IMR-90 (cell line): ENCODE measurements at regions of chr4 and their contacts with region 1.

Region 1: DNA sequence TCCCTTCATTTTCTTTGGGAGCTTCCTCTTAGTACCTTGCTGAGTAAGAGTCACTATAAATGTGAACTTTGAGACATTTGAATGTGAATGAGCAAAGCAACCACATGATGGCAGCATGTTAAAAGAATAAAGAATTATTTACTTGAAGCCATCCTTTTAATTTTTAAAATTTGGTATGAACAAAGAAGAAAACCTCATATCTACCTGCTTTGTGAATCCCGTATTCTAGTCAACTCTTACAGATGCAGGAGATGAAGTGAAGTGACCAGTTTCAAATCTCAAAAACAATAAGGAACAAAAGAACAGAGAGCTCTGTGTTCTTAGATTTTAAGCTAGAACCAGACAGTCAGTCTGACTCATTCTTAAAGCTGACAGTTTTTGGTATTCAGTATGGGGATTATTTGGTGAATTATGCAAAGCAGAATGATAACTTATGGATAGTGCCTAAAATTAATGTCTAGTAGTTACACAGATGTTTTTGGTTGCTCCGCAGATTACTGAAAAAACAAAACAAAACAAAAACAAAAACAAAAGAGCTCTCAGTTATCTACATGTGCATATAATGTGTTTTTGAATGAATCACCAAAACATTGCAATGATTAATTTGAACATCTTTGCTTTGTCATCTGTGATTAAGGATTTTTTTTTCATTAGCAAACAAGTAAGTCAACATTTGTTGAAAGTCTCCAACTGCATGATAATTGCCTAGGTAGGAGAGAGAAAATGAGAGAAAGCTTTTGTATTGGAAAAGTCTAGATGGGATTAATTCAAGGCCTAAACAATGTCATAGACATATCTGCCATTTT is 48.2 kb upstream of the H2AZ1 start:
- DNase-seq: peak; percentile 62
- ATAC-seq: peak; percentile 90
- H3K4me3 ChIP-seq: no peak overlapping the region
- H3K27ac ChIP-seq: no peak overlapping the region
- H3K4me1 ChIP-seq: no peaks in the 10 kb centered on the region
- H3K27me3 ChIP-seq: no peaks in the 10 kb centered on the region
- CTCF ChIP-seq: peak; percentile 58
- POLR2A ChIP-seq: no peak
- RAD21 ChIP-seq: peak; percentile 45

Region 2: DNA sequence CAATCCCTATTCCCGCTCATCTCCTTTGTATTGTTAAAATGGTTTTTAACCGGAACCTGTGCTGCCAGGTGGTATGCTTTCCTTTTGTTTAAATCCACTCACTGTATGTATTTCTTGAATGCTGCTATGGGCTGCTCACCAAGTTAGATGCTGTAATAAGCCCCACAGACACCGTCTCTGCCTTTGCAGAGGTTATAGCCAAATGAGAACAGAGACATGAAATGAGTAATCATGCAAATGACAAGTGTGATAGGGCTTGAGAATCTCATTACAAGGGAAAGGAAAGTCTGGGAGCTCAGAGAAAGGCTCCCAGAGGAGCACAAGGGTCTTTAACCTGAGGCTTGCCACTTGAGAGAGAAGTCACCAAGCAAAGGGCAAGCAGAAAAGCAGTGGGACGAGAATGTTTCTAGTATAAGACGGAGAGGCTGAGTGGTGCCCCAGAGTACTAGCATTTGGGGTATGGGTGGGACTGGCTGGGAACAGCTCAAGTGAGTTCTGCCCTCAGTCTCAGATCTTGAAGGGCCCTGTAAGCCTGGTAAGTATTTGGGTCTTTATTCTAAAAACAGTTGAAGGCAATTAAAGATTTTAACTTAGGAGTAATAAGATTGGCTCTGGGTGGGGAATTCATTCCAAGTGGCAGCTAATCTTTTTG is 62.6 kb after region 1 on chr4:
- CTCF ChIA-PET with region 1: interaction called, 7 read pairs
- POLR2A ChIA-PET with region 1: no interaction called
- dilution Hi-C with region 1: no loop called
- in situ Hi-C with region 1: no loop called
- intact Hi-C with region 1: loop called (anchors 1 kb)
- DNase-seq: no peak
- ATAC-seq: no peak
- H3K4me3 ChIP-seq: no peak overlapping the region
- H3K27ac ChIP-seq: no peak overlapping the region
- H3K4me1 ChIP-seq: peaks cover 5% of the 10 kb centered on the region
- H3K27me3 ChIP-seq: no peaks in the 10 kb centered on the region
- CTCF ChIP-seq: no peak
- POLR2A ChIP-seq: no peak
- RAD21 ChIP-seq: no peak

Region 3: GRCh38 chr4:100093091-100093866 is 95.0 kb after region 1 on chr4:
- CTCF ChIA-PET with region 1: interaction called, 12 read pairs
- POLR2A ChIA-PET with region 1: no interaction called
- dilution Hi-C with region 1: no loop called
- in situ Hi-C with region 1: no loop called
- intact Hi-C with region 1: loop called (anchors 5 kb)
- DNase-seq: peak; percentile 82
- ATAC-seq: peak; percentile 87
- H3K4me3 ChIP-seq: no peak overlapping the region
- H3K27ac ChIP-seq: no peak overlapping the region
- H3K4me1 ChIP-seq: peaks cover 3% of the 10 kb centered on the region
- H3K27me3 ChIP-seq: no peaks in the 10 kb centered on the region
- CTCF ChIP-seq: peak; percentile 78
- POLR2A ChIP-seq: no peak
- RAD21 ChIP-seq: peak; percentile 76

Region 4: GRCh38 chr4:100494166-100494825 is 496.0 kb after region 1 on chr4:
- CTCF ChIA-PET with region 1: no interaction called
- POLR2A ChIA-PET with region 1: no interaction called
- dilution Hi-C with region 1: no loop called
- in situ Hi-C with region 1: no loop called
- intact Hi-C with region 1: loop called (anchors 10 kb)
- DNase-seq: peak; percentile 35
- ATAC-seq: peak; percentile 77
- H3K4me3 ChIP-seq: no peak overlapping the region
- H3K27ac ChIP-seq: no peak overlapping the region
- H3K4me1 ChIP-seq: no peaks in the 10 kb centered on the region
- H3K27me3 ChIP-seq: no peaks in the 10 kb centered on the region
- CTCF ChIP-seq: no peak
- POLR2A ChIP-seq: no peak
- RAD21 ChIP-seq: no peak

Region 5: GRCh38 chr4:100742045-100742444 is 743.8 kb after region 1 on chr4:
- CTCF ChIA-PET with region 1: no interaction called
- POLR2A ChIA-PET with region 1: no interaction called
- dilution Hi-C with region 1: no loop called
- in situ Hi-C with region 1: no loop called
- intact Hi-C with region 1: loop called (anchors 10 kb)
- DNase-seq: peak; percentile 19
- ATAC-seq: no peak
- H3K4me3 ChIP-seq: no peak overlapping the region
- H3K27ac ChIP-seq: no peak overlapping the region
- H3K4me1 ChIP-seq: no peaks in the 10 kb centered on the region
- H3K27me3 ChIP-seq: no peaks in the 10 kb centered on the region
- CTCF ChIP-seq: 0 out of 2 replicates have a peak, but pooled peaks have one; percentile 30
- POLR2A ChIP-seq: no peak
- RAD21 ChIP-seq: no peak